Mammary epithelial cell (primary cell): ENCODE measurements at regions of chr2 and their contacts with region 1.

Region 1: DNA sequence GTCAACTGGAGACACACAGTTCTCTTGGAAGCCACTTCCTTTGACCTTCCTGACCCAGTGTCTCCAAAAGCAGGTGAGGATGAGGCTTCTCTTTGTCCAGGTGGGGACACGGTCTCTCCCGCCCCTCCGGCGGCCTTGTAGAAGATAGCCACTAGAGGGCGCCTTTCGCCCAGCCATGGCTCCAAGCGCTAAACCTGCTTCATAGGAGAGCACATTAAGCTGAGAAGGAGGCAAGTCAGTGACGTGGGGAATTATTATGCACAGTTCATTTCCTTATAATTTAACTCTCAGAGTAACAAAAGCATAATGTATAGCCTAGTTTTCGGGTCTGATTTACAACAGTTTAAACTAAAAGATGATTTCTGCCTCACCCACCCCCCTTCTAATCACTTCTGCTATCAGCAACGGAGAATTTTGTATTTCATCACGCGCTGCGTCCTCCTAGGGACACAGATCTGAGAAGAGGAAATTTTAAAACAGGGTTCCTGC is 208.7 kb downstream of the ICOS start:
- DNase-seq: peak; percentile 59
- H3K4me3 ChIP-seq: peak overlapping the region; percentile 22 to 39 (median 28)
- H3K27ac ChIP-seq: no peak overlapping the region
- H3K4me1 ChIP-seq: no peaks in the 10 kb centered on the region
- H3K27me3 ChIP-seq: peaks cover 2% of the 10 kb centered on the region
- CTCF ChIP-seq: peak; percentile 91 to 95

Region 2: DNA sequence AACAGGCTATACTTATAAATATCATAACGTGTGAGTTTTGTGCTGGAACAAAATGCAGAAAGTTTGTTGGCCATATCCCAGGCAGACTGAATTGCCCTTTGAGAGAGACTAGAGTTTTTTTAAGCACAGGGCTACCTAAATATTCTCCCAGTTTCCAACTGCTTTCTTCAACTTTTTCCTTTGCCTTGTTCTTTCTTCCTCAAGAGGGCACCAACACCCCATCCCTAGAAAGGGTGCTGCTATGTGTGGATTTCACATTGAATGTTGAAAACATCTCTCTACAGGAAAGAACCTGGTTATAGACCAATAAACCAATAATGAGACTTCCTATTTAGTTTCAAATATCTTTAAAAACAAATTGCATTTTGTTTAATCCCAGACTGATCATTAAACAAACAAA is 120.8 kb before region 1 on chr2:
- CTCF ChIA-PET with region 1: no interaction called
- dilution Hi-C with region 1: no loop called
- in situ Hi-C with region 1: no loop called
- intact Hi-C with region 1: loop called (anchors 10 kb)
- DNase-seq: peak; percentile 46
- H3K4me3 ChIP-seq: no peak overlapping the region
- H3K27ac ChIP-seq: no peak overlapping the region
- H3K4me1 ChIP-seq: peaks cover 15% of the 10 kb centered on the region
- H3K27me3 ChIP-seq: no peaks in the 10 kb centered on the region
- CTCF ChIP-seq: peak; percentile 64 to 86

Region 3: GRCh38 chr2:204177977-204178540 is 32.8 kb after region 1 on chr2:
- CTCF ChIA-PET with region 1: interaction called, 17 read pairs
- dilution Hi-C with region 1: no loop called
- in situ Hi-C with region 1: no loop called
- intact Hi-C with region 1: loop called (anchors 1 kb)
- DNase-seq: peak; percentile 9
- H3K4me3 ChIP-seq: no peak overlapping the region
- H3K27ac ChIP-seq: no peak overlapping the region
- H3K4me1 ChIP-seq: peaks cover 4% of the 10 kb centered on the region
- H3K27me3 ChIP-seq: no peaks in the 10 kb centered on the region
- CTCF ChIP-seq: peak; percentile 56 to 58

Region 4: GRCh38 chr2:204260162-204260877 is 115.0 kb after region 1 on chr2:
- CTCF ChIA-PET with region 1: no interaction called
- dilution Hi-C with region 1: no loop called
- in situ Hi-C with region 1: no loop called
- intact Hi-C with region 1: loop called (anchors 5 kb)
- DNase-seq: peak; percentile 19
- H3K4me3 ChIP-seq: no peak overlapping the region
- H3K27ac ChIP-seq: no peak overlapping the region
- H3K4me1 ChIP-seq: peaks cover 4% of the 10 kb centered on the region
- H3K27me3 ChIP-seq: no peaks in the 10 kb centered on the region
- CTCF ChIP-seq: peak; percentile 65 to 76

Region 5: GRCh38 chr2:204325468-204325867 is 180.2 kb after region 1 on chr2:
- CTCF ChIA-PET with region 1: no interaction called
- dilution Hi-C with region 1: no loop called
- in situ Hi-C with region 1: no loop called
- intact Hi-C with region 1: loop called (anchors 2 kb)
- DNase-seq: peak; percentile 59
- H3K4me3 ChIP-seq: no peak overlapping the region
- H3K27ac ChIP-seq: no peak overlapping the region
- H3K4me1 ChIP-seq: no peaks in the 10 kb centered on the region
- H3K27me3 ChIP-seq: no peaks in the 10 kb centered on the region
- CTCF ChIP-seq: peak; percentile 78 to 80

Region 6: DNA sequence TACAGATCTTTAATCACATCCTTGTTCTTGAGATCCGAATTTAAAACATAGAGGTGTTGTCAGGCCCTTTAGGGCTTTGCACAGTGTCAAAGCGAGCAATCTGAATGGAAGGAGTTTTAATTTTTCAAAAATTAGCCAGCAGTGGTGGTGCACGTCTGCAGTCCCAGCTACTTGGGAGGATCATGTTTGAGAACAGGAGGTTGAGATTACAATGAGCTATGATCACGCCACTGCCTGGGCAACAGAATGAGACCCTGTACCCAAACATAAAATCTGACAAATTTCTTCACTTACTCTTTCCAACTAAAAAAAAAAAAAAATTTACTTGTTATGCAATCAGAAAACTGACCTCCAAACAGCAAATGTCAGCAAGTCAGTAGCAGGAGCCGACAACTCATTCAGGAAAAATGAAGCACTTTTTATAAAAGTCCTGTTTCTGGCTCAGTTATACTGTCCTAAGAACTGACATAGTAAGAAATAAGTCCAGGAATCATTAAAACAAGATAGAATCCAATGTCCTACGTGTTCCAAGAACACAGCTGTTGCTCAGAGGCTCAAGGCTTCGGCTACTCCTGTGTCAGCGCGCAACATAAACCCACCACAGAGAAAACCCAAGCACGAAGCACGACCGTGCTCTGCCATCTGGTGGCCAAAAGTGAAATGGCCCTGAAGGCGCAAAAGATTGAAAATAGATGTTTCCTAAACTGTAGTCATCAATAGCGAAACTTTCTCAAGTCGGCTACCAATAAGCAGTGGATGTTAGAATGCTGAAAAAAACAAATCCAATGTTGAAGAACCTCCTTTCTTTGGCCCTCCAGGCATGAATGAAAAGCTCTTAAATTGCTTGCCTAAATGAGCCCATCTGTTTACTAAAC is 1802.6 kb after region 1 on chr2:
- CTCF ChIA-PET with region 1: no interaction called
- dilution Hi-C with region 1: no loop called
- in situ Hi-C with region 1: no loop called
- intact Hi-C with region 1: loop called (anchors 10 kb)
- DNase-seq: peak; percentile 35
- H3K4me3 ChIP-seq: no peak overlapping the region
- H3K27ac ChIP-seq: no peak overlapping the region
- H3K4me1 ChIP-seq: no peaks in the 10 kb centered on the region
- H3K27me3 ChIP-seq: no peaks in the 10 kb centered on the region
- CTCF ChIP-seq: peak; percentile 92